Colonic mucosa (tissue), 4 donors: ENCODE measurements at regions of chr19 and their contacts with region 1.

Region 1: GRCh38 chr19:2236314-2237050 is at the starts of genes PLEKHJ1 and SF3A2:
- DNase-seq: peak; percentile 97
- H3K4me3 ChIP-seq: peak within 1 kb of the TSS; percentile 97
- H3K27ac ChIP-seq: peak within 1 kb of the TSS; percentile 100
- H3K4me1 ChIP-seq: peaks cover 27% of the 10 kb centered on the region
- H3K27me3 ChIP-seq: no peaks in the 10 kb centered on the region
- CTCF ChIP-seq: peak; percentile 97
- total RNA-seq, gene PLEKHJ1: 176 to 238 TPM
- total RNA-seq, gene SF3A2: 60.9 to 99.8 TPM

Region 2: DNA sequence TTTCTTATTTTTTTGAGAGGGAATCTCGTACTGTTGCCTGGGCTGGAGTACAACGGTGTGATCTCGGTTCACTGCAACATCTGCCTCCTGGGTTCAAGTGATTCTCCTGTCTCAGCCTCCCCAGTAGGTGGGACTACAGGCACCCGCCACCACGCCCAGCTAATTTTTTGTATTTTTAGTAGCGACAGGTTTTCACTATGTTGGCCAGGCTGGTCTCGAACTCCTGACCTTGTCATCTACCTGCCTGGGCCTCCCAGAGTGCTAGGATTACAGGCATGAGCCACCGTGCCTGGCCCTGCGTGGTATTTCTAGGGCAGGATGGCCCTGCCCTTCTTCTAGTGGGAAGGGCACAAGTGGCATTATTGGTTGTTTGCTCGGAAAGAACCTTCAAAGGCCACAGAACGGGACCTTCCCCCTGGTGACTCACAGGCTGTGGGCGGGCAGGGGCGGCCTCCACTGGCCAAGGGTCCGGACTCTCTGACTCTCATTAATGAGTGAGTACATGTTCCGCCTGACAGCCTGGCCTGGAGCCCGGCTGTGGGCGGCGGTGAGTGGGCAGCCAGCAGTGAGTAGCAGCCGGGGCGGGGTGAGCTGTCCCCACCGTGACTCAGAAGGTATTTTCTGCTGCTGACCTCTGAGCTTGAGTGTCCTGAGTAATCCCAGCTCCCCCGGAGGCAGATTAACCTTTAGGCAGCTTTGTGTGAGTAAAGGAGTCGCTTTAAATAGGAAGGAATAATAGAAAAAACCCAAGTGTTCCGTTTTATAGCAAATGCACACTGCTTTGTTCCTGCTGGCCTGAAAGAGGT is 67.7 kb before region 1 on chr19:
- intact Hi-C with region 1: loop called (anchors 10 kb)
- DNase-seq: peak; percentile 95
- H3K4me3 ChIP-seq: peak overlapping the region; percentile 4
- H3K27ac ChIP-seq: peak overlapping the region; percentile 90
- H3K4me1 ChIP-seq: peaks cover 39% of the 10 kb centered on the region
- H3K27me3 ChIP-seq: no peaks in the 10 kb centered on the region
- CTCF ChIP-seq: no peak